Endothelial cell of umbilical vein (primary cell): ENCODE measurements at regions of chr12 and their contacts with region 1.

Region 1: DNA sequence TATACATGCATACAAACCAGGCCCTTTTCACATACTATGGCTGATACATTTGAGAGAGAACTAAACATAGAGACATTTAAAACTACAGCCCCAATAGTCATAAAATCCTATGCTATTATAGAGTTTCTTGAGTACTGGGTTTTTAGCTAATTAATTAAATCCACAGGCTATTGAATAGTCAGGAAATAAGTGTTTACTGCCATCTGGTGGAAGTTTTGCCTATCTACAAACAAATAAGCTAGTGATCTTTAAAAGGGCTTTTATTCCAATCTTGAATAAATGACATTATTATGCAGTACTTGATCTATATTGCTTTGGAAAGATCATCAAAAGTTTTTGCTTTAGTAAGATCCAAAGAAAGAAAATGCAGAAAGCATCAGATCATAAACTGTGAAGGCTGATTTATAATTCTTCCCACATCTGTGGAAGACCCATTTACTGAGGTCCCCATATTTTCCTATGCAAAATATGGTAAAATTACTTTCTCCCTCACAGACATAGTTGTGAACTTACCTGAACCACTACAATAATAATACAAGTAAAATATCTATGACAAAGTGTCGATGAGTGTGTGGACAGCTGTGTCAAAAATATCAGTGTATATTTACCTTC is 131.3 kb downstream of the ITPR2 start:
- DNase-seq: peak; percentile 65
- H3K4me3 ChIP-seq: no peak overlapping the region
- H3K27ac ChIP-seq: no peak overlapping the region
- H3K4me1 ChIP-seq: peaks cover 56% of the 10 kb centered on the region
- H3K27me3 ChIP-seq: no peaks in the 10 kb centered on the region
- CTCF ChIP-seq: peak; percentile 20 to 22
- POLR2A ChIP-seq: no peak

Region 2: DNA sequence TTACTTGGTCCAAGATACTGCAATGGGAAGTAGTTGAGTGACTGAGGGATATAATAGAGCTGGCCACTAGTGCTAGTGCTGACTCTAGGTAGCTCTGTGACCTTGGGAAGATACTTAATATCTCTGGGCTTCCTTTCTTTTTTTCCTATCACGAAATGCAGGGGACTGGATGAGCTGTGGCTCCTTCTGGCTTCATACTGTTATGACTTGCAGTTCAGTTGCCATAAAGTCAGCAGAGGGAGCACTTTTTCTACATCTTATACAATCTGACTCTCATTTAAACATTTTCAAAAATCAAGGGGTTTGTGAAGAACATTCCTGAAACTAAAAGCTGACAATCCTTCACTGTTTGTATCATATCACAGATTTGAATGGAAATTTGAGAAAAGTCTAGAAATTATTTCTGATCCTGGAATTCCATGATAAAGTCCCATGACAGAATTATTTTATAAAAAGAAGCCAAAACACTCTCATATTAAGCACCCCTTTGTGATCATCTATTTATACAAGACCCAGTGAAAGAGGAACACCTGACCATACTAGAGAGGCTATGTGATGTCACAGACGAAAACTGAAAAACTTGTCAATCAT is 582.2 kb before region 1 on chr12:
- CTCF ChIA-PET with region 1: interaction called, 38 read pairs
- POLR2A ChIA-PET with region 1: no interaction called
- dilution Hi-C with region 1: no loop called
- intact Hi-C with region 1: loop called (anchors 2 kb)
- DNase-seq: peak; percentile 67
- H3K4me3 ChIP-seq: no peak overlapping the region
- H3K27ac ChIP-seq: no peak overlapping the region
- H3K4me1 ChIP-seq: peaks cover 20% of the 10 kb centered on the region
- H3K27me3 ChIP-seq: peaks cover 11 to 18% of the 10 kb centered on the region in 2 experiments
- CTCF ChIP-seq: peak; percentile 44 to 49
- POLR2A ChIP-seq: no peak

Region 3: DNA sequence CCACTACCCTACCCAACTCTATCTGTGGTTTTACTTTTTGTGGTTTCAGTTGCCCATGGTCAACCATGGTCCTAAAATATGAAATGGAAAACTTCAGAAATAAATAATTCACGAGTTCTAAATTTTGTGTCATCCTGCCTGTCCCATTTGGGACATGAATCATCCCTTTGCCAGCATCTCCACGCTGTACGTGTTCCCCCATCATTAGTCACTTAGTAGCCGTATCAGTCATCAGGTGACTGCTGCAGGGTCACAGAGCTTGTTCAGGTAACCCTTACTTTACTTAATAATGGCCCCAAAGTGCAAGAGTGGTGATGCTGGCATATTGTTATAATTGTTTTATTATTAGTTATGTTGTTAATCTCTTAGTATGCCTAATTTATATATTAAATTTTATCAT is 78.6 kb before region 1 on chr12:
- CTCF ChIA-PET with region 1: interaction called, 112 read pairs
- POLR2A ChIA-PET with region 1: no interaction called
- dilution Hi-C with region 1: no loop called
- intact Hi-C with region 1: no loop called
- DNase-seq: no peak
- H3K4me3 ChIP-seq: no peak overlapping the region
- H3K27ac ChIP-seq: no peak overlapping the region
- H3K4me1 ChIP-seq: no peaks in the 10 kb centered on the region
- H3K27me3 ChIP-seq: no peaks in the 10 kb centered on the region
- CTCF ChIP-seq: no peak
- POLR2A ChIP-seq: no peak

Region 4: DNA sequence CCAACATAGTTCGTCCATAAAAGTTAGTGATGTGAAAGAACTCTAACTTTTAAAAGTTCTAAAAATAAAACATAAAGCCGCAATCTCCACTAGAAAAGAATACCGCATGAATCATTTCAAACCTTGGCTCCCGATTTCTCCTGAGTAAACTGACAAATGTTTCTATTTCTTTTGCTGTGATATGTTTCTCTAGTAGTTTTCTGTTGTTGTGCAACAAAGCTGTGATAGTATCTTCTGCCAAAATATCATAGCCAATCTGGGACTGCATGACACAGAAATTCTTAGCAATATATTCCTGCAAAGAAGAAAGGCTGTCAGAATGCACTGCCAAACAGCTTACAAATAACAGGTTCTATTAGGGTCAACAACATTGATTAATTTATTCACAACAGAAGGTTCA is 42.7 kb before region 1 on chr12:
- CTCF ChIA-PET with region 1: interaction called, 27 read pairs
- POLR2A ChIA-PET with region 1: no interaction called
- dilution Hi-C with region 1: no loop called
- intact Hi-C with region 1: no loop called
- DNase-seq: no peak
- H3K4me3 ChIP-seq: no peak overlapping the region
- H3K27ac ChIP-seq: no peak overlapping the region
- H3K4me1 ChIP-seq: no peaks in the 10 kb centered on the region
- H3K27me3 ChIP-seq: no peaks in the 10 kb centered on the region
- CTCF ChIP-seq: no peak
- POLR2A ChIP-seq: no peak

Region 5: GRCh38 chr12:26732005-26732908 is 30.5 kb after region 1 on chr12:
- CTCF ChIA-PET with region 1: interaction called, 13 read pairs
- POLR2A ChIA-PET with region 1: no interaction called
- dilution Hi-C with region 1: no loop called
- intact Hi-C with region 1: no loop called
- DNase-seq: no peak
- H3K4me3 ChIP-seq: no peak overlapping the region
- H3K27ac ChIP-seq: no peak overlapping the region
- H3K4me1 ChIP-seq: peaks cover 37% of the 10 kb centered on the region
- H3K27me3 ChIP-seq: no peaks in the 10 kb centered on the region
- CTCF ChIP-seq: no peak
- POLR2A ChIP-seq: no peak

Region 6: DNA sequence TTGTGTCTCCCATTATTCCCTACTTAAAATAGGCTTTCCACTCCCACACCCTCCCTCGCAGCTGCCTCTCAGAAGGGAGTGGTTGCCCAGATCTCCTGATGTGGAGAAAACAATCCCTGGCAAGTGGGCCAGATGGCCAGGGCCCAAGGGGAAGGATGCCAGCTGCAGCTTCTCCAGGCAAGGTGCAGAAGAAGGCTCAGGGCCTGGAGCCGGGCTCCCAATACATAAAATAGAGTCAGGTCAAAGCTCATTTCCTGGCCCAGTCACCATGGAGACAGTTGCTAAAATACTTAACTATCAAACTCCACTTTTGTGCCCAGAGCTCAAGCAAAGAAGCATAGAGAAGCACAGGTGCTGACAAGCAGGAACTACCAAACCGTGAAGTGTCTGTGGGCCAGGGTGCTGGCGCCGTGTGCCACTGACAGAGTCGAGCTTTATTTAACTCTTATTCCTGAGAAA is 177.0 kb after region 1 on chr12:
- CTCF ChIA-PET with region 1: interaction called, 21 read pairs
- POLR2A ChIA-PET with region 1: no interaction called
- dilution Hi-C with region 1: no loop called
- intact Hi-C with region 1: no loop called
- DNase-seq: peak; percentile 93
- H3K4me3 ChIP-seq: no peak overlapping the region
- H3K27ac ChIP-seq: no peak overlapping the region
- H3K4me1 ChIP-seq: peaks cover 9% of the 10 kb centered on the region
- H3K27me3 ChIP-seq: no peaks in the 10 kb centered on the region
- CTCF ChIP-seq: no peak
- POLR2A ChIP-seq: no peak